ENCODE measurements at regions of chr17 and their contacts with region 1.

Region 1: GRCh38 chr17:78570921-78571694 is 6.1 kb downstream of the DNAH17 start:
- DNase-seq: no peak
- H3K4me3 ChIP-seq: no peak overlapping the region
- H3K27ac ChIP-seq: no peak overlapping the region
- H3K4me1 ChIP-seq: no peaks in the 10 kb centered on the region
- H3K27me3 ChIP-seq: no peaks in the 10 kb centered on the region
- CTCF ChIP-seq: no peak
- EP300 ChIP-seq: no peak
- POLR2A ChIP-seq: no peak

Region 2: GRCh38 chr17:78589885-78590284 is 18.8 kb after region 1 on chr17:
- in situ Hi-C with region 1: no loop called
- intact Hi-C with region 1: loop called (anchors 2 kb)
- DNase-seq: no peak
- H3K4me3 ChIP-seq: no peak overlapping the region
- H3K27ac ChIP-seq: no peak overlapping the region
- H3K4me1 ChIP-seq: peaks cover 0 to 10% (median 8%) of the 10 kb centered on the region in 4 donors
- H3K27me3 ChIP-seq: no peaks in the 10 kb centered on the region
- CTCF ChIP-seq: no peak
- EP300 ChIP-seq: no peak
- POLR2A ChIP-seq: no peak